Caco-2 (cell line): ENCODE measurements at regions of chr4 and their contacts with region 1.

Region 1: GRCh38 chr4:90012918-90013317 is 114.3 kb upstream of the CCSER1 start:
- DNase-seq: no peak
- H3K4me3 ChIP-seq: no peak overlapping the region
- H3K4me3 Mint-ChIP-seq: no peak overlapping the region
- H3K27ac Mint-ChIP-seq: no peak overlapping the region
- H3K4me1 ChIP-seq: peaks cover 12% of the 10 kb centered on the region; the same call in 1 of the 2 replicates
- H3K4me1 Mint-ChIP-seq: peaks cover 7% of the 10 kb centered on the region
- H3K27me3 ChIP-seq: no peaks in the 10 kb centered on the region
- H3K27me3 Mint-ChIP-seq: no peaks in the 10 kb centered on the region
- CTCF ChIP-seq: no peak

Region 2: GRCh38 chr4:89957046-89957926 is 55.6 kb before region 1 on chr4:
- CTCF ChIA-PET with region 1: no interaction called
- POLR2A ChIA-PET with region 1: no interaction called
- intact Hi-C with region 1: loop called (anchors 5 kb)
- DNase-seq: peak in 1 of 2 experiments; percentile 2
- H3K4me3 ChIP-seq: no peak overlapping the region
- H3K4me3 Mint-ChIP-seq: no peak overlapping the region
- H3K27ac Mint-ChIP-seq: peak overlapping the region; percentile 58
- H3K4me1 ChIP-seq: no peaks in the 10 kb centered on the region; the same call in 1 of the 2 replicates
- H3K4me1 Mint-ChIP-seq: no peaks in the 10 kb centered on the region
- H3K27me3 ChIP-seq: no peaks in the 10 kb centered on the region
- H3K27me3 Mint-ChIP-seq: no peaks in the 10 kb centered on the region
- CTCF ChIP-seq: no peak

Region 3: GRCh38 chr4:89994176-89994873 is 18.6 kb before region 1 on chr4:
- CTCF ChIA-PET with region 1: interaction called, 3 read pairs
- POLR2A ChIA-PET with region 1: no interaction called
- intact Hi-C with region 1: loop called (anchors 1 kb)
- DNase-seq: peak in 1 of 2 experiments; percentile 67
- H3K4me3 ChIP-seq: no peak overlapping the region
- H3K4me3 Mint-ChIP-seq: peak overlapping the region; percentile 10
- H3K27ac Mint-ChIP-seq: peak overlapping the region; percentile 74
- H3K4me1 ChIP-seq: peaks cover 64% of the 10 kb centered on the region
- H3K4me1 Mint-ChIP-seq: peaks cover 49% of the 10 kb centered on the region
- H3K27me3 ChIP-seq: no peaks in the 10 kb centered on the region
- H3K27me3 Mint-ChIP-seq: no peaks in the 10 kb centered on the region
- CTCF ChIP-seq: no peak

Region 4: DNA sequence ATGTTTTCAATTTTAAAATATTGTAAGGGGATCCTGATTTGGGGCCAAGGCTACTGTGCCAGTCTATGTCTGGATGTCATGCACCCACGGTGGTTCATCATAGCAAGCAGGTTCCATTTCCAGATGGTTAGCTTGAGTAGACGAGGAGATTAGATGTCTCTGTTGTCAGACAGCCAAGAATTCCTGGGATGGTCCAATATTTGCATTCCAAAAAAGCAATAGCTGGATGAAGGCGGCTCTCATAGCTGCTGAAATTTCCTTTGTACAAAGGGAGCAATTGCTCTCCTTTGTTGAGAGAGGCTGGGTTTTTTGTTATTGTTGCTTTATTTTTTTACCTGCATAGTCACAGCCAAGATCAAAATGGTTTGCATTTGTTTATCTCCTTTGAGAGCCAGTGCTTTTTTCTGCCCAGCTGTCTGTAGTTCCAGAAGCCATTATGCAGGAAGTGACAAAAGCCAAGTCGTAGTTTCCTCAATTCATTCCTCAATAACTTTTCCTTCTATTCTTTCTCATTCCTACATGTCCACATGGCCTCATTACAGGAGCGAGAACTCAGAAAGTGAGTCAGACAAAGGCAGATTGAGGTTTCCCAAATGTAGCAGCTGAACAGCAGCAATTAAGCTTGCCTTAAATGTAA is 10.4 kb before region 1 on chr4:
- CTCF ChIA-PET with region 1: no interaction called
- POLR2A ChIA-PET with region 1: no interaction called
- intact Hi-C with region 1: loop called (anchors 1 kb)
- DNase-seq: peak in 1 of 2 experiments; percentile 25
- H3K4me3 ChIP-seq: no peak overlapping the region
- H3K4me3 Mint-ChIP-seq: peak overlapping the region; percentile 44
- H3K27ac Mint-ChIP-seq: peak overlapping the region; percentile 51
- H3K4me1 ChIP-seq: peaks cover 33% of the 10 kb centered on the region
- H3K4me1 Mint-ChIP-seq: peaks cover 33% of the 10 kb centered on the region
- H3K27me3 ChIP-seq: no peaks in the 10 kb centered on the region
- H3K27me3 Mint-ChIP-seq: no peaks in the 10 kb centered on the region
- CTCF ChIP-seq: no peak